ENCODE measurements at regions of chr5 and their contacts with region 1.

Region 1: DNA sequence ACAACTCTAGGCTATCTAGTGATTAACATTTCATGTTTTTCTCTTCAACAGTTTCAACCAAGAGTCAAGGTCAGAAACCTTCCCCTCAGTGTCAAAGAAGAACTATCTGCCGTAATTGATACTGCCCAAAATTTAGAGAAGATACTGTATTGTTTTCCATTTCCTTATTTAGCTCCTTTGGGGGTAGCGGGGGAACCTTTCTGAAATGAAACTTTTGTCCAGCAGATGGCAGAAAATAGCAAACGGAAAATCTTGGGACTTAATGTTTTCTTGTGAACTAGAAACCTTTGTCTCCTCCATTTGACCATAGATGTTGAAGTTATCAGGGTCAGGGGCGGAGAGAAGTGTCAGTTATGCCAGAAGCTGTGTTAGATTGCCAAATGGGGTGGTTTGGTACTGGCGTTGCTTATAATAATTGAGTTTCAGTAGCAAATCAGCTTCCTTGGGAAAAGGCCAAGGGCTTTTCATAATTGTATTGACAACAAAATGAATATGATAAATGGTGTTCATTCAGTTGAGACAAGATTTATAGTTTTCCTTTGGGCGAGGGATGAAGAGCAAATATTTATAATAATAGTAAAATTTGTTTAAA is 101.7 kb upstream of the TLX3 start:
- DNase-seq: no peak
- H3K4me3 ChIP-seq: no peak overlapping the region
- H3K27ac ChIP-seq: no peak overlapping the region
- H3K4me1 ChIP-seq: peaks cover 0 to 5% (median 0%) of the 10 kb centered on the region in 4 donors
- H3K27me3 ChIP-seq: no peaks in the 10 kb centered on the region
- CTCF ChIP-seq: peak in 3 of 4 experiments; percentile 19 to 46 (median 25)
- EP300 ChIP-seq: no peak
- POLR2A ChIP-seq: no peak

Region 2: DNA sequence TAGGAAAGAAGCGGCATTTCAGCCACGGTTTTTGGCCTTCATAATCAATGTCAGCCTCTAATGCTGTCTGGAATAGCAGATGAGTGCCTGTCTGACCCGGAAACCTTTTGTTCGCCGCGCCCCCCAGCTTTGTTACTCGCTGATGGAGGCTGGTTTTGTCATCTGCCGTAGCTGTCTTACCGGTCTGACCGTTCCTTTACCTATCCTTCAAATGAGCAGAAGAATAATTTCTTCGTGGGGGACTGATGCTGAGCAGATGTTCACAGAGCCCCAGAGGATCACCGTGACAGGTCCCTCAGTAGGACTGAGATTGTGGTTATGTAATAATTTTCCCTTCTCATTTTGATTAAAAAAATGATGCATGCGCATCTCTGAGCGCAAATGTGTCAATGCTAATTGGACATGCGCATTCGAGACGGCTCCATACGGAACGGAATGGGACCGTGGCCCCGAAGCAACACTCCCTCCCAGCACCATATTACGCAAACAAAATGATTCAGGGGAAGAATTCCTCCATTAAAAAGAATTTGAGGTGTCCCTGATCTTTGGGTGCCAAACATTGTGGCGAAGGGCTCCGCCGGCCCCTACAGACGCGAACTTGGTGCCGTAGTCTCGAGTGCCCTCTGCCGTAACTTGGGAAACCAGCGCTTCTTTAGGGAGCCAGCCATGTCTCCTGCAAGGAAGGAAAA is 129.3 kb after region 1 on chr5:
- intact Hi-C with region 1: loop called (anchors 5 kb)
- DNase-seq: no peak
- H3K4me3 ChIP-seq: peak overlapping the region in 3 of 4 donors; percentile 23 to 40 (median 37)
- H3K27ac ChIP-seq: no peak overlapping the region
- H3K4me1 ChIP-seq: peaks cover 0 to 8% (median 4%) of the 10 kb centered on the region in 4 donors
- H3K27me3 ChIP-seq: peaks cover 0 to 39% (median 0%) of the 10 kb centered on the region in 3 donors
- CTCF ChIP-seq: peak in 3 of 4 experiments; percentile 16 to 50 (median 20)
- EP300 ChIP-seq: no peak
- POLR2A ChIP-seq: no peak

Measured in sigmoid colon (tissue), 7 donors.